CD4-positive, alpha-beta memory T cell (primary cell): ENCODE measurements at regions of chr6 and their contacts with region 1.

Region 1: DNA sequence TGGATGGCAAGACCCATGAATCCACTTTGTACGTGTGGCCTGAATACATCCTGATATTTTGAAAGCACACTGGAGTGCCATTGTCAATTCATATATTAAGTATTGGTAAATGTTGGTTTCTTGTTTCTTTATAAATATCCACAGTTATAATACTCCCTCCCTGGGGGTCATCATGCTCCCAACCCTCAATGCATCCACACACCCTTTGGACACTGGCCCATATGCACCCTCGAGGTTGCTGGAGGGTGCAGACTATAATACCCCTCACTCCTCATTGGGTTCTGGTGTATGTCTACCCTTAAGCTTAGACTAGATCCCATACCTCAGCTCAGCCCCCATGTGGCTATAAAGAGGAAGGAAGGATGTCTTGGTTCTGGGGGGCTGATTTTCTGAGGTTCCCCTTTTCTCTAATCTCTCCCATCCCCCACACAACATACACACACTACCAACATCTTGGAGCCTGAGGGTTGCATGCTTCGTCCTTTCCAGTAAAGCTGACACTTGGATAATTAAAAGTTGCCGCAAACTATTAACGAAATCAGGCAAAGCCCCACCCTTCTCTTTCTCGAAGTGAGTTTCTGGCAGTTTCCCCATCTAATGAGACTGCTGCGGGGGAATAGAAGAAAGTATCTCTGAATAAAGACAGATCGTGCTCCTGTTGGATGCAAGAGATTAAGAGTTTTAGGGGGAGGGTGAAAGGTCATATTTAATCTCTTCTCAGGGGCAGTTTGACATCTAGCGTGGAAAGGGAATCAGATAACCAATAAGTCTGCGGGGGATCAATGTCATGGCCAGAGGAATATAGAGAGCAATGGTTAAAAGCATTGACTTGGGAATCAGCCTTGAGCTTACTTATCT is 7.4 kb downstream of the PIM1 start:
- DNase-seq: no peak
- H3K4me3 ChIP-seq: no peak overlapping the region
- H3K4me3 Mint-ChIP-seq: peak overlapping the region in 7 of 8 donors; percentile 18 to 46 (median 28)
- H3K27ac ChIP-seq: no peak overlapping the region
- H3K27ac Mint-ChIP-seq: peak overlapping the region; percentile 47 to 94 (median 86)
- H3K4me1 ChIP-seq: peaks cover 87% of the 10 kb centered on the region
- H3K4me1 Mint-ChIP-seq: peaks cover 50 to 91% (median 66%) of the 10 kb centered on the region in 4 donors
- H3K27me3 ChIP-seq: no peaks in the 10 kb centered on the region
- H3K27me3 Mint-ChIP-seq: no peaks in the 10 kb centered on the region

Region 2: DNA sequence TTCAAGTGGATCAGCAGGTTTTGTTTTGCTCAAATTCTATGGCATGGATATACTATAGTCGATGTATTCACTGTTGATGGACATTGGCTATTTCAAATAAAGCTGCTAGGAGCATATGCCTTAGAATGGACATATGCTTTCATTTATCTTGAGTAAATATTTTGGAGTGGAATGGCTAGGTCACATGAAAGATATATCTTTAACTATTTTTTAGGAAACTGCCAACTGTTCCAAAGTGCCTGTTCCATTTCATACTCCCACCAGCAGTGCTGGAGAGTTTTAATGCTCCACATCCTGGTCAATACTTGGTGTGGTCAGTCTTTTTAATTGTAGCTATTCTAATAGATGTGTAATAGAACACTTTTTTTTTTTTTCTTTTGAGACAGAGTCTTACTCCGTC is 88.4 kb before region 1 on chr6:
- CTCF ChIA-PET with region 1: no interaction called
- POLR2A ChIA-PET with region 1: no interaction called
- intact Hi-C with region 1: no loop called
- DNase-seq: no peak
- H3K4me3 ChIP-seq: no peak overlapping the region
- H3K4me3 Mint-ChIP-seq: no peak overlapping the region
- H3K27ac ChIP-seq: no peak overlapping the region
- H3K27ac Mint-ChIP-seq: no peak overlapping the region
- H3K4me1 ChIP-seq: no peaks in the 10 kb centered on the region
- H3K4me1 Mint-ChIP-seq: peaks cover 1 to 7% (median 6%) of the 10 kb centered on the region in 4 donors
- H3K27me3 ChIP-seq: no peaks in the 10 kb centered on the region
- H3K27me3 Mint-ChIP-seq: no peaks in the 10 kb centered on the region

Region 3: GRCh38 chr6:37190159-37190535 is 12.8 kb after region 1 on chr6:
- CTCF ChIA-PET with region 1: interaction called, 26 read pairs
- POLR2A ChIA-PET with region 1: interaction called, 93 read pairs
- intact Hi-C with region 1: no loop called
- DNase-seq: no peak
- H3K4me3 ChIP-seq: no peak overlapping the region
- H3K4me3 Mint-ChIP-seq: peak overlapping the region in 4 of 8 donors; percentile 10 to 52 (median 25)
- H3K27ac ChIP-seq: no peak overlapping the region
- H3K27ac Mint-ChIP-seq: peak overlapping the region in 3 of 7 donors; percentile 47 to 68 (median 57)
- H3K4me1 ChIP-seq: peaks cover 65% of the 10 kb centered on the region
- H3K4me1 Mint-ChIP-seq: peaks cover 30 to 55% (median 39%) of the 10 kb centered on the region in 4 donors
- H3K27me3 ChIP-seq: no peaks in the 10 kb centered on the region
- H3K27me3 Mint-ChIP-seq: no peaks in the 10 kb centered on the region